ENCODE measurements at regions of chr2 and their contacts with region 1.

Region 1: GRCh38 chr2:100242891-100243619 is 79.2 kb downstream of the LONRF2 start:
- DNase-seq: peak; percentile 54 to 72 (median 63)
- ATAC-seq: peak; percentile 94
- H3K4me3 ChIP-seq: no peak overlapping the region
- H3K27ac ChIP-seq: no peak overlapping the region
- H3K4me1 ChIP-seq: no peaks in the 10 kb centered on the region
- H3K27me3 ChIP-seq: peaks cover 8 to 67% of the 10 kb centered on the region in 2 experiments; a peak in 4 of 5 replicates
- CTCF ChIP-seq: peak; percentile 72 to 79 (median 78)
- EP300 ChIP-seq: no peak
- POLR2A ChIP-seq: no peak
- RAD21 ChIP-seq: peak; percentile 88 to 93

Region 2: DNA sequence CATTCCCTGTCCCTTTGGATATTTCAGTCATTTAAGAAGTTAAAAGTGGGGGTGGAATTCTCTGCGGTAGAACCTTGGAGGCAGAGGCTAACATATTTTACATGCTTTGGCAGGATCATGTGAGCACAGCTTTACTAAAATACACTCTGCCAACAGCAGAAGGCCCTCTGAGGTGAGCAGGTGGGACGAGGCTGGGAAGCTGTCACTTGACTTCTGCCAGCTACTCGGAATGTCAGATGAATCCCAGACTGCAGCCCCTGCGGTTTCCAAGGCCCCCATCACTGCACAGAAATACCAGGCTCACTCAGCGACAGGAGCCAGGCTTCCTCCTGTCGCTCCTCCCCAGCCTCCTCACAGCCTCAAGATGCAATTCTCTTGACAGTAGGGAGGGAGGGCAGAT is 532.3 kb before region 1 on chr2:
- CTCF ChIA-PET with region 1: no interaction called
- POLR2A ChIA-PET with region 1: no interaction called
- in situ Hi-C with region 1: loop called (anchors 25 kb)
- intact Hi-C with region 1: no loop called
- DNase-seq: no peak
- ATAC-seq: no peak
- H3K4me3 ChIP-seq: no peak overlapping the region
- H3K27ac ChIP-seq: no peak overlapping the region
- H3K4me1 ChIP-seq: no peaks in the 10 kb centered on the region
- H3K27me3 ChIP-seq: peaks cover 10 to 11% of the 10 kb centered on the region in 2 experiments; a peak in 3 of 5 replicates
- CTCF ChIP-seq: no peak
- EP300 ChIP-seq: no peak
- POLR2A ChIP-seq: no peak
- RAD21 ChIP-seq: no peak

Region 3: GRCh38 chr2:99725820-99726219 is 517.2 kb before region 1 on chr2:
- CTCF ChIA-PET with region 1: no interaction called
- POLR2A ChIA-PET with region 1: no interaction called
- in situ Hi-C with region 1: loop called (anchors 25 kb)
- intact Hi-C with region 1: loop called (anchors 10 kb)
- DNase-seq: no peak
- ATAC-seq: no peak
- H3K4me3 ChIP-seq: no peak overlapping the region
- H3K27ac ChIP-seq: no peak overlapping the region
- H3K4me1 ChIP-seq: no peaks in the 10 kb centered on the region
- H3K27me3 ChIP-seq: no peaks in the 10 kb centered on the region; a peak in 1 of 5 replicates
- CTCF ChIP-seq: peak in 1 of 3 experiments; percentile 44; a peak in 3 of 6 replicates
- EP300 ChIP-seq: no peak
- POLR2A ChIP-seq: no peak
- RAD21 ChIP-seq: peak; percentile 65 to 78

Region 4: GRCh38 chr2:99818842-99819241 is 424.2 kb before region 1 on chr2:
- CTCF ChIA-PET with region 1: no interaction called
- POLR2A ChIA-PET with region 1: interaction called, 3 read pairs
- in situ Hi-C with region 1: no loop called
- intact Hi-C with region 1: loop called (anchors 10 kb)
- DNase-seq: no peak
- ATAC-seq: no peak
- H3K4me3 ChIP-seq: no peak overlapping the region
- H3K27ac ChIP-seq: no peak overlapping the region
- H3K4me1 ChIP-seq: no peaks in the 10 kb centered on the region
- H3K27me3 ChIP-seq: peaks cover 3 to 18% of the 10 kb centered on the region in 2 experiments; a peak in 4 of 5 replicates
- CTCF ChIP-seq: no peak
- EP300 ChIP-seq: no peak
- POLR2A ChIP-seq: no peak
- RAD21 ChIP-seq: peak in 1 of 2 experiments; percentile 29; a peak in 2 of 4 replicates

Region 5: GRCh38 chr2:100178051-100178788 is 64.8 kb before region 1 on chr2:
- CTCF ChIA-PET with region 1: interaction called, 5 read pairs
- POLR2A ChIA-PET with region 1: no interaction called
- in situ Hi-C with region 1: no loop called
- intact Hi-C with region 1: loop called (anchors 2 kb)
- DNase-seq: peak; percentile 52 to 90 (median 65)
- ATAC-seq: peak; percentile 100
- H3K4me3 ChIP-seq: no peak overlapping the region
- H3K27ac ChIP-seq: no peak overlapping the region
- H3K4me1 ChIP-seq: no peaks in the 10 kb centered on the region
- H3K27me3 ChIP-seq: peaks cover 13 to 17% of the 10 kb centered on the region in 2 experiments; a peak in 4 of 5 replicates
- CTCF ChIP-seq: peak; percentile 64 to 84 (median 76)
- EP300 ChIP-seq: no peak
- POLR2A ChIP-seq: no peak
- RAD21 ChIP-seq: peak; percentile 63 to 71

Region 6: DNA sequence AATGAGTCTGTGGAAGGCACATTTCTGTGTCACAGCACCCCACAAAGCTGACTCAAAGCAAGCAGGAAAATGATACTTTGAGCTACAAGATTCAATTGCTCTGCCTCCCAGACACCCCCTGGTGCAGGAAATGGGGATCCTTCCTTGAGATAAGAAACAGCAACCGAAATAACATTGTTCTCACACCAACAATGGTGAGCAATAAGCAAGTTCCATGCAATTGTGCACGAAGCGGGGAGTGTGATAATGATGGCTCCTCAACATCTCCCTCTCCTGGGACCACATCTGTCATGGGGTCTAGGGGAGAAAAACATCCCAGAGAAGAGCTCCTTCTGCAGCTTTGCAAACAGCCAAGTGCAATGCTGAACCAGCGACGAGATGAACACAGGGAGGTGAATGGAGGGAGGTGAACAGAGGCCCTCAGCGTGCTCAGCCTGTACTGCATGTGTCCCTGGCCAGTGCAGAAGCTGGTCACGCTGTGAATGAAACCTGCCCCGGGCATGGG is 387.5 kb after region 1 on chr2:
- CTCF ChIA-PET with region 1: no interaction called
- POLR2A ChIA-PET with region 1: no interaction called
- in situ Hi-C with region 1: no loop called
- intact Hi-C with region 1: no loop called
- DNase-seq: no peak
- ATAC-seq: no peak
- H3K4me3 ChIP-seq: no peak overlapping the region
- H3K27ac ChIP-seq: no peak overlapping the region
- H3K4me1 ChIP-seq: no peaks in the 10 kb centered on the region
- H3K27me3 ChIP-seq: peaks cover 15 to 52% of the 10 kb centered on the region in 2 experiments
- CTCF ChIP-seq: no peak
- EP300 ChIP-seq: no peak
- POLR2A ChIP-seq: no peak
- RAD21 ChIP-seq: no peak

Measured in K562 (cell line).